Activated CD8-positive, alpha-beta T cell treated with anti-CD3 and anti-CD28 coated beads for 36 hours (primary cell): ENCODE measurements at regions of chr12 and their contacts with region 1.

Region 1: DNA sequence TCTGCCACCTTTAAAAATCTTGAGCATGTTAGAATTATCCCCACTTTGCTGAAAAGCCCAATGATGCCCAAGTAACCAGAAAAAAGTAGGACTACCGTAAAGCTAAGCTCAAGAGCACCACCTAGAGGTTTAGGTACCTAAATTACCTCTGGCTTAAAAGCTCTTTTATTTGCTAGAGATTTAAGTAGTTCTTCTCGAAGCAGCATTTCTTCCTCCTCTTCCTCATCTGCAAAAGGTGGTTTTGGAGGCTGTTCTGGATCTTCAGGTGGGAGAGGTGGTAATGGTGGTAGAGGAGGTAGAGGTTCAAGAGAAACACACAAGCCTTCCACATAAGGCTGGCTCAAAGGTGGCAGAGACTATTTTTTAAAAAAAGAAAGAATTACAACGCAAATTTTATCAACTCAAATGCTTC is 26.9 kb downstream of the ZFC3H1 start:
- DNase-seq: no peak
- ATAC-seq: peak; percentile 77
- H3K4me3 Mint-ChIP-seq: no peak overlapping the region
- H3K27ac Mint-ChIP-seq: peak overlapping the region; percentile 75
- H3K4me1 Mint-ChIP-seq: peaks cover 10% of the 10 kb centered on the region
- H3K27me3 Mint-ChIP-seq: no peaks in the 10 kb centered on the region
- CTCF ChIP-seq: peak; percentile 75

Region 2: DNA sequence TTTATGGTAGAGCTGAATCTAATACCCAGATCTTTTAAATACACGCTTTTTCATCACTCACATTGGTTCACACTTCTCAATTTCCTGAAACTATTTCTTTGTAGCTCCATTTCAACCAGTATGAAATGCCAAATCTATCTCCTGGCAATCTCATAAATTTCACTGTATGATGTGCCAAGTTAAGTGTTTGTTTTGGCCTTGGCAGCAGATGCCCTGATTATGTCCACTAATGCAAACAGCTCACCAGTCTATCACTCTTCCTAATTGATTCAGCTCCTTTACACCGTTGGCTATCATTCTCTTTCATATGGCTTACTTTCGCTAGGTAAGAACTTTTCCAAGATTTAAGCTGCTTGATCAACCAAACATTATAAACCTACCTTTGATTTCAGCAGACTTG is 31.7 kb before region 1 on chr12:
- CTCF ChIA-PET with region 1: interaction called, 10 read pairs
- POLR2A ChIA-PET with region 1: no interaction called
- intact Hi-C with region 1: no loop called
- DNase-seq: no peak
- ATAC-seq: no peak
- H3K4me3 Mint-ChIP-seq: no peak overlapping the region
- H3K27ac Mint-ChIP-seq: peak overlapping the region; percentile 35
- H3K4me1 Mint-ChIP-seq: peaks cover under 1% of the 10 kb centered on the region
- H3K27me3 Mint-ChIP-seq: no peaks in the 10 kb centered on the region
- CTCF ChIP-seq: no peak

Region 3: GRCh38 chr12:71610031-71610795 is 26.5 kb before region 1 on chr12:
- CTCF ChIA-PET with region 1: interaction called, 17 read pairs
- POLR2A ChIA-PET with region 1: no interaction called
- intact Hi-C with region 1: no loop called
- DNase-seq: no peak
- ATAC-seq: no peak
- H3K4me3 Mint-ChIP-seq: no peak overlapping the region
- H3K27ac Mint-ChIP-seq: peak overlapping the region; percentile 74
- H3K4me1 Mint-ChIP-seq: peaks cover 13% of the 10 kb centered on the region
- H3K27me3 Mint-ChIP-seq: no peaks in the 10 kb centered on the region
- CTCF ChIP-seq: no peak

Region 4: GRCh38 chr12:71626098-71626497 is 10.6 kb before region 1 on chr12:
- CTCF ChIA-PET with region 1: interaction called, 30 read pairs
- POLR2A ChIA-PET with region 1: no interaction called
- intact Hi-C with region 1: no loop called
- DNase-seq: no peak
- ATAC-seq: no peak
- H3K4me3 Mint-ChIP-seq: peak overlapping the region; percentile 4
- H3K27ac Mint-ChIP-seq: peak overlapping the region; percentile 64
- H3K4me1 Mint-ChIP-seq: peaks cover 17% of the 10 kb centered on the region
- H3K27me3 Mint-ChIP-seq: no peaks in the 10 kb centered on the region
- CTCF ChIP-seq: no peak

Region 5: DNA sequence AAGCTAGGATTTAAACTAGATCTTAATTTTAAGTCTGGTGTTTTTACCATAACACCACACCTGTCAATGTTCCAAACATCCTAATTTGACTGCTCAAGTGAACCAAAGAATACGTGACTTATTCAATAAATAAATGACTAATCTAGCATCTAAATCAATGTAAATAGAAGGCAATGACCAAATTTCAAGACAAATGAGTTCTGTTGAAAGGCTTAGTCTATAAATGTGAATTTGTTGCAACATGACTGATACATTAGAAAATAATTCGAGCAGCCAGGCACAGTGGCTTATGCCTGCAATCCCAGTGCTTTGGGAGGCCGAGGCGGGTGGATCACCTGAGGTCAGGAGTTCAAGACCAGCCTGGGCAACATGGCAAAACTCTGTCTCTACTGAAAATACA is 11.8 kb after region 1 on chr12:
- CTCF ChIA-PET with region 1: interaction called, 22 read pairs
- POLR2A ChIA-PET with region 1: interaction called, 4 read pairs
- intact Hi-C with region 1: no loop called
- DNase-seq: no peak
- ATAC-seq: no peak
- H3K4me3 Mint-ChIP-seq: no peak overlapping the region
- H3K27ac Mint-ChIP-seq: no peak overlapping the region
- H3K4me1 Mint-ChIP-seq: peaks cover 25% of the 10 kb centered on the region
- H3K27me3 Mint-ChIP-seq: no peaks in the 10 kb centered on the region
- CTCF ChIP-seq: no peak

Region 6: DNA sequence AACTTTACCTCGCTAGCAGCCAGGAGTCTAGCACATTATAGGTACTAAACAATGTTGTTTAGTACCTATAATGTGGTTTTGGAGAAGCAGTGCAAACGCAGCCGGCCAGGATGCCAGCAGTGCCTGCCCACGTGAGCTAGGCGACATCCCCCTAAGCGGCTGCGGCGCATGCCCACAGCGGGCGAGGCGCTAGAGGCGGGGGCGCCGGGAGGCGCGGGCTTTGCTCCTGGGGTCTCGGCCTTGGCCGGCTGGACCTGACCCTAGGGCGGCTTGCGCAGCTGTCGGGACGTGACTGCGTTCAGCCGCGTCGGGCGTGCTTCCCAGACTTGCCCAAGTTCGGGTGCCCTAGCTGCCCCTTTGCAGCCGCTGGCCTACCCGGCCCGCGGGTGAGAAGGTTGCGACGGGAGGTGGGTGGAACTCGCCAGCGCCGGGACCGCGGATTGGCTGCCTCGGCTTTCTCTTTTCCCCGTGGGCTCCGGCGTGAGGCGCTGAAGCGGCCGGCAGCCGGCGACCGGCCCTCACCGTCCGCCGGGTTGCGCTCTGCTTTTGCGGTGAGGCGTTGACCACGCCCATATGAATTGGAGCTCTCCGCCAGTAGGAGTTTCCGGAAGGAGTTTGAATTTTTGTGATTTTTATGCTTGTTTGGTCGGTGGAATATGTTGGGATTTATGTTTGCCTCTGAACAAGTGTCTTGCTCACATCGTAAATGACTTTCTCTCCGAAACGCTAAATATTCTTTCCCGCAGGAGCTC is 49.4 kb after region 1 on chr12 and contains the start of gene TMEM19:
- CTCF ChIA-PET with region 1: interaction called, 10 read pairs
- POLR2A ChIA-PET with region 1: no interaction called
- intact Hi-C with region 1: no loop called
- DNase-seq: peak; percentile 86
- ATAC-seq: peak; percentile 89
- H3K4me3 Mint-ChIP-seq: peak within 1 kb of the TSS; percentile 94
- H3K27ac Mint-ChIP-seq: peak within 1 kb of the TSS; percentile 94
- H3K4me1 Mint-ChIP-seq: peaks cover 19% of the 10 kb centered on the region
- H3K27me3 Mint-ChIP-seq: no peaks in the 10 kb centered on the region
- CTCF ChIP-seq: no peak
- total RNA-seq, gene TMEM19: 14.2 to 16.5 TPM